Activated naive CD4-positive, alpha-beta T cell treated with anti-CD3 and anti-CD28 coated beads for 36 hours (primary cell): ENCODE measurements at regions of chr11 and their contacts with region 1.

Region 1: GRCh38 chr11:6603287-6604080 is at the starts of genes ILK and RRP8:
- DNase-seq: peak; percentile 92
- H3K4me3 Mint-ChIP-seq: no peak within 1 kb of the TSS
- H3K27ac Mint-ChIP-seq: no peak within 1 kb of the TSS
- H3K4me1 Mint-ChIP-seq: peaks cover 33% of the 10 kb centered on the region
- H3K27me3 Mint-ChIP-seq: no peaks in the 10 kb centered on the region
- total RNA-seq, gene ILK: 65.2 to 65.7 TPM
- total RNA-seq, gene RRP8: 31.9 to 33.5 TPM

Region 2: GRCh38 chr11:6389921-6390724 is 213.4 kb before region 1 on chr11 and contains the start of gene SMPD1:
- CTCF ChIA-PET with region 1: no interaction called
- intact Hi-C with region 1: loop called (anchors 1 kb)
- DNase-seq: peak; percentile 95
- H3K4me3 Mint-ChIP-seq: peak within 1 kb of the TSS; percentile 91
- H3K27ac Mint-ChIP-seq: peak within 1 kb of the TSS; percentile 98
- H3K4me1 Mint-ChIP-seq: peaks cover 46% of the 10 kb centered on the region
- H3K27me3 Mint-ChIP-seq: no peaks in the 10 kb centered on the region
- total RNA-seq, gene SMPD1: 24.5 to 27.5 TPM

Region 3: DNA sequence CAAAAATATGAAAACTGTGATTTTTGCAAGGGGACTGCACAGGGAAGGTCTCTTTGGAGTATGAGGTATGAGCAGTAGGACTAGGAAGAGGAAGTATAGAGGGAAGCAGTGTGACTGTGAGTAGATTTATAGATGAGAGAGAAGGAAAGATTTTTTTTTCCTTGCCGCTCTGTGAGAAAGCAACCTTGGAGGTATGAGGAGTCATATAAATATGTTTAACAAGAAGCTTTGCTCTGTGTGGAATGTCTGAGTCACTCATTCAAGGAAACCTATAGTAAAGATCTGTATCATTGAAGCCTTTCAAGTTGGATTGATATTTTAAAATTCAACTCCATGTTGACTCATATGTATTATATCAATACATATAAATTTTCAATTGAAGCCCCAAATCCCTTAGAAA is 80.2 kb before region 1 on chr11:
- CTCF ChIA-PET with region 1: interaction called, 3 read pairs
- intact Hi-C with region 1: loop called (anchors 1 kb)
- DNase-seq: no peak
- H3K4me3 Mint-ChIP-seq: no peak overlapping the region
- H3K27ac Mint-ChIP-seq: peak overlapping the region; percentile 48
- H3K4me1 Mint-ChIP-seq: peaks cover 46% of the 10 kb centered on the region
- H3K27me3 Mint-ChIP-seq: no peaks in the 10 kb centered on the region

Region 4: GRCh38 chr11:6667733-6668374 is 64.4 kb after region 1 on chr11:
- CTCF ChIA-PET with region 1: interaction called, 10 read pairs
- intact Hi-C with region 1: loop called (anchors 1 kb)
- DNase-seq: peak; percentile 59
- H3K4me3 Mint-ChIP-seq: no peak overlapping the region
- H3K27ac Mint-ChIP-seq: peak overlapping the region; percentile 28
- H3K4me1 Mint-ChIP-seq: peaks cover 63% of the 10 kb centered on the region
- H3K27me3 Mint-ChIP-seq: no peaks in the 10 kb centered on the region

Region 5: GRCh38 chr11:6705905-6706535 is 102.5 kb after region 1 on chr11:
- CTCF ChIA-PET with region 1: interaction called, 3 read pairs
- intact Hi-C with region 1: loop called (anchors 1 kb)
- DNase-seq: peak; percentile 66
- H3K4me3 Mint-ChIP-seq: no peak overlapping the region
- H3K27ac Mint-ChIP-seq: no peak overlapping the region
- H3K4me1 Mint-ChIP-seq: peaks cover 17% of the 10 kb centered on the region
- H3K27me3 Mint-ChIP-seq: no peaks in the 10 kb centered on the region

Region 6: GRCh38 chr11:7513234-7514098 is 910.0 kb after region 1 on chr11 and contains the start of gene PPFIBP2:
- CTCF ChIA-PET with region 1: no interaction called
- intact Hi-C with region 1: loop called (anchors 10 kb)
- DNase-seq: peak; percentile 87
- H3K4me3 Mint-ChIP-seq: peak within 1 kb of the TSS; percentile 86
- H3K27ac Mint-ChIP-seq: peak within 1 kb of the TSS; percentile 90
- H3K4me1 Mint-ChIP-seq: peaks cover 48% of the 10 kb centered on the region
- H3K27me3 Mint-ChIP-seq: no peaks in the 10 kb centered on the region
- total RNA-seq, gene PPFIBP2: 22.2 to 26.1 TPM